Posterior vena cava (tissue), 2 donors: ENCODE measurements at regions of chr1 and their contacts with region 1.

Region 1: GRCh38 chr1:229243638-229244037 is 27.3 kb upstream of the RAB4A start:
- DNase-seq: no peak

Region 2: GRCh38 chr1:228751360-228752113 is 492.1 kb before region 1 on chr1:
- intact Hi-C with region 1: no loop called
- DNase-seq: no peak

Region 3: DNA sequence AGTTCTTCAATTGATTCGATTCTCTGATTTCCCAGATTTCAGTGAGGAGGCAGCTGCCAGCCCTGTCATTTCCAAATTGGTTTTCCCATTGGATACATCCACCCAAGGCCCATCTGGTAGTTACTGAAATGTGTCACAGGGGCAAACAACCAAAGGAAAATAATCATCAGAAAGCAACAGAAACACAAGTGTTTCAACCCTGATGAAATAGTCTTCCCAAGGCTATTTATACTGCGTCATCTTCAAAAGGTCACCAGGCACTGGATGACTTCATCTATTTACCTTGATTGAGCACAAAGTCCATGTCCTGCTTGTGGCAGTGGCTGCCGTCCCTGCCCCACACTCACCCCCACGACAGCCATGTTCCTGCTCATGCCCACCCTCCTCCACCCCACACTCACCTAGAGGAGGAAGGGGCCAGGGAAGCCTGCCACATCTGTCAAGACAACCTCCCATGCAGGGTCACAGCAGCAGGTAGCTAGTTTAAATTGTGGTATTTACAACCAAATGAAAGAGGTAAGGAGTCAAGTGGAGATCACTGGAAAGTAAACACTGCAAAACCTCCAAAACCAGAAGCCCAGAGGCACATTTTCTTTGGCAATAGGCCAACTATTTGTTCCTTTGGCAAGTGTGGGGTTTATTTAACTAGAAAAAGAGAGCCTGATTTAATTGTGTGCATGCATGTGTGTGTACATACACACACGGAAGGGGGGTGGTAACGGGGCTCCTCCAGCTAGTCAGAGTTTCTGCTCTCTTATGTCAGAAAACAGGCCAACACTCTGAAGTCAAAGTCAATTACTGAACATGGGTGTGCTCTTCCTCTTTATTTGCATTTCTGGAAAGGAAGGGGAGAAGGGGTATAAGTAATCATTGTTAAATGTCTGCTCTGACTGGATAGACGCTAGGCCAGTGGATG is 22.3 kb before region 1 on chr1:
- intact Hi-C with region 1: loop called in 1 of 2 experiments (anchors 2 kb)
- DNase-seq: no peak

Region 4: DNA sequence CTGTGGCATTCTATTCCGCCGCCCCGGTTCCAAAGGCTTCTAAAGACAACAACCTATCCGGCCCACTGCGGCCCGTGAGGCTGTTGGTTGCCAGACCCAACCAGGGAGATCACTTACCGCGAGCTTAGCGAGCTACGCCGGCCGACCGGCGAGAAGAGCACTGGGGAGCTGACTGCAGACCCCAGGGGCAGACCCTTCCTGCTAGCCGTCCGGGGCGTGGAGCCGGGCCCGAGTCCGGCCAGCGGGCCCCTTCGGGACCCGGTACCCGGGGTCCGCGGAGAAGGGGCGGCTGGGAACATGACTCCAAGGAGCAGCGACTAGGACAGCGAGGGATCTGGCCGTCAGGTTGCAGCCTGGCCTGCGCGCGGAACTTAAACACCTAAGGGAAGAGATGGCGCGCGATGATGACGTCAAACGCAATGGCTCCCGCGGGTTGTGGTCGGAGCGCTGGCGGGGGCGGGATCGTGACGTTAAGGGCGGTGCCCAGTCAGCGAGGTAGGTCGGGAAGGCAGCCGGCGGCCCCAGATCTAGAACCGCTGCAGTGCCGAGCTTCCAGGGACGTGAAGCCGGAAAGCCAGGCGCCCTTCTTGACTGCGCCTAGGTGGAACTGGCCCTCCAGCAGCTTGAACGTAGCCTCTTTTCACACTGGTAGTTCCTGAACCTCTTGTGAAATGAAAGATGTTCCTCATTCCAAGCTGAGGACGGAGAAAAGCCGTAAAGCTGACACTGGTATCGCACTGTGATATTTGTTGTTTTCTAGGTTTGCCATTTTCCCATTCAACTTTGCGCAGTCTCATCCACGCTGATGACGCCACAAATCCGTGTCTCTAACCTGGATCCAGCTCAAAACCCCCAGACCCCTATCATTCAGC is 264.5 kb after region 1 on chr1 and contains the start of gene NUP133:
- intact Hi-C with region 1: no loop called
- DNase-seq: peak; percentile 100
- total RNA-seq, gene NUP133: 26.0 to 28.9 TPM